Activated CD4-positive, alpha-beta memory T cell treated with anti-CD3 and anti-CD28 coated beads for 36 hours (primary cell): ENCODE measurements at regions of chr11 and their contacts with region 1.

Region 1: DNA sequence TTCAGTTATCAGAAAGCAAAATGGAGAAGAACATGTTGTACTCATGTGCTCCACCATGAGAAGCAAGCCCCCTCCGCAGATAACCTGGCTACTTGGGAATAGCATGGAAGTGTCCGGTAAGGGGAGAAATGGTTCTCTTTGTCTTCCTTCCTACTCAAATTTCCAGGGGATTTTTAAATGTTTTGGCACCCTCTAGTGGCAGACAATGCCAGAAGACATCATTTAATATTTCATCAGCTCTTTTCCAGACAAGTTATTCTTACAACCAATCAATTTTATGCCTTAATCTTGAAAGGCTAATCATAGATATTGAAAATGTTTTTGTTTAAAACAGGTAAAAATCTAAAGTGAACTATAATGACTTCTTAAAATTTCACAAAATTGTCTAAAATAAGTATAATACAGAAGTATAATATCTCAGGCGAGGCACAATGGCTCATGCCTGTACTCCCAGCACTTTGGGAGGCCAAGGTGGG is 15.7 kb downstream of the CRTAM start:
- DNase-seq: peak; percentile 28
- H3K4me3 Mint-ChIP-seq: no peak overlapping the region
- H3K27ac Mint-ChIP-seq: no peak overlapping the region
- H3K4me1 Mint-ChIP-seq: peaks cover 42% of the 10 kb centered on the region
- H3K27me3 Mint-ChIP-seq: peaks cover 1% of the 10 kb centered on the region

Region 2: GRCh38 chr11:122412581-122412980 is 441.4 kb before region 1 on chr11:
- CTCF ChIA-PET with region 1: no interaction called
- POLR2A ChIA-PET with region 1: no interaction called
- intact Hi-C with region 1: no loop called
- DNase-seq: no peak
- H3K4me3 Mint-ChIP-seq: no peak overlapping the region
- H3K27ac Mint-ChIP-seq: no peak overlapping the region
- H3K4me1 Mint-ChIP-seq: no peaks in the 10 kb centered on the region
- H3K27me3 Mint-ChIP-seq: no peaks in the 10 kb centered on the region

Region 3: DNA sequence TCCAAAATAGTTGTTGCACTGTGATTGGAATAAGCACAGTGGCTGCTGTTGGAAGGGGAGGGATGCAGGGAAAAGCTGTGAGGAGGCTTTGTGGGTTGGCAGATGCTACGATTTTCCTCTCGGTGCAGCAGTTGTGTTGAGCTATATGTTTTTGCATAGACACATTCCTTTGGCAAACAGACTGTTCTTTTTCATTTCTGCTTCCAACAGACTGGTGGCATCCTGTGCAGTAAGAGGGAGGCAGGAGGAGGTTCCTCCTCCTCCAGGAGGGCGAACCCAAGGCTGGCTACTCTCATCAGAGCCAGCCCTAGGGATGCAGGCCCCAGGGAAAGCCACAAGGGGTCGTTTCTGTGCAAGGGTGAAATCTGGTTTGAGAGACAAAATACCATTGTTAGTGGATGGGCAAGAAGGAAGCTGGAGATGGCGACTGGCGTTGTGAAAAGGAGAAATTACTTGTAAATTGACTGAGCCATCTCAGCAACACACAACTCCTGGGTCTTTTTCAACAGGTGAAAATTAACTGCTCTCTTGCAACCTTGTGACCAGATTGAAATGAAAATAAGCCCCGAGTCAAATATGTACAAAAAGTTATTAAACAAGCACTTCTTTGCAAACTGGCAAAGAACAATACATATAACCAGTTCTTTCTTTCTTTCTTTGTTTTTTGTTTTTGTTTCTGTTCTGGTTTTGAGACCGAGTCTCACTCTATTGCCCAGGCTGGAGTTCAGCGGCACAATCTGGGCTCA is 225.0 kb before region 1 on chr11:
- CTCF ChIA-PET with region 1: interaction called, 75 read pairs
- POLR2A ChIA-PET with region 1: no interaction called
- intact Hi-C with region 1: loop called (anchors 1 kb)
- DNase-seq: peak; percentile 79
- H3K4me3 Mint-ChIP-seq: no peak overlapping the region
- H3K27ac Mint-ChIP-seq: no peak overlapping the region
- H3K4me1 Mint-ChIP-seq: peaks cover 6% of the 10 kb centered on the region
- H3K27me3 Mint-ChIP-seq: peaks cover 1% of the 10 kb centered on the region

Region 4: GRCh38 chr11:122754553-122755322 is 99.3 kb before region 1 on chr11:
- CTCF ChIA-PET with region 1: interaction called, 12 read pairs
- POLR2A ChIA-PET with region 1: interaction called, 3 read pairs
- intact Hi-C with region 1: no loop called
- DNase-seq: peak; percentile 42
- H3K4me3 Mint-ChIP-seq: no peak overlapping the region
- H3K27ac Mint-ChIP-seq: no peak overlapping the region
- H3K4me1 Mint-ChIP-seq: peaks cover 51% of the 10 kb centered on the region
- H3K27me3 Mint-ChIP-seq: no peaks in the 10 kb centered on the region

Region 5: DNA sequence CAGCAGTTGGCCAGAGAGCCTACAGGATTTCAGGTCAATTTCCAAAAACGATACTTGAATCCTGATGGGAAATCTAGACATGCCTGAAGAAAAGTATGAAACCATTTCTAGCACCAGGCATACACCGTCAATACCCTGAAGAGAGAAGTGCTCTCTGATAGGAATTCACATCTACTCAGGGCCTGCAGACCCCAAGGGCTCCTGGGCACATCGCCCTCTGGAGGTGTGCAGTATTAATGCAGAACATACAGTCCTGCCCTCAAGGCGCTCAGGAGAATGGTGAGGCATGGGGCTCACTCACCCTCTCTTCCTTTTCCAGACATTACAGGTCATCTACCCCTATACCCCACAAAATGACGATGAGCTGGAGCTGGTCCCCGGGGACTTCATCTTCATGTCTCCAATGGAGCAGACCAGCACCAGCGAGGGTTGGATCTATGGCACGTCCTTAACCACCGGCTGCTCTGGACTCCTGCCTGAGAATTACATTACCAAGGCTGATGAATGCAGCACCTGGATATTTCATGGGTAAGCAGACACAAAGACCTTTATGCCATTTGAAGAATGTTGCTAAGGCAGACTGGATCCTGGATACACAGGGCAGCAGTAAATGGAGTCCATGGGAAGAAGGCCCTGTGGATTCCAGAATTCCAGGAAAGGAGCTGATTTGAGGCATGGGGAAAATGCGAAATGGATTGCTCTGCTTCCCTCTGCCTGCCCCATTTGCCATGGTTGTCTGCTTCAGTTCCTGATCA is 65.1 kb before region 1 on chr11:
- CTCF ChIA-PET with region 1: interaction called, 118 read pairs
- POLR2A ChIA-PET with region 1: no interaction called
- intact Hi-C with region 1: no loop called
- DNase-seq: no peak
- H3K4me3 Mint-ChIP-seq: no peak overlapping the region
- H3K27ac Mint-ChIP-seq: no peak overlapping the region
- H3K4me1 Mint-ChIP-seq: no peaks in the 10 kb centered on the region
- H3K27me3 Mint-ChIP-seq: no peaks in the 10 kb centered on the region

Region 6: GRCh38 chr11:122808478-122808869 is 45.5 kb before region 1 on chr11:
- CTCF ChIA-PET with region 1: interaction called, 38 read pairs
- POLR2A ChIA-PET with region 1: no interaction called
- intact Hi-C with region 1: no loop called
- DNase-seq: peak; percentile 41
- H3K4me3 Mint-ChIP-seq: no peak overlapping the region
- H3K27ac Mint-ChIP-seq: peak overlapping the region; percentile 0
- H3K4me1 Mint-ChIP-seq: peaks cover 27% of the 10 kb centered on the region
- H3K27me3 Mint-ChIP-seq: no peaks in the 10 kb centered on the region

Region 7: DNA sequence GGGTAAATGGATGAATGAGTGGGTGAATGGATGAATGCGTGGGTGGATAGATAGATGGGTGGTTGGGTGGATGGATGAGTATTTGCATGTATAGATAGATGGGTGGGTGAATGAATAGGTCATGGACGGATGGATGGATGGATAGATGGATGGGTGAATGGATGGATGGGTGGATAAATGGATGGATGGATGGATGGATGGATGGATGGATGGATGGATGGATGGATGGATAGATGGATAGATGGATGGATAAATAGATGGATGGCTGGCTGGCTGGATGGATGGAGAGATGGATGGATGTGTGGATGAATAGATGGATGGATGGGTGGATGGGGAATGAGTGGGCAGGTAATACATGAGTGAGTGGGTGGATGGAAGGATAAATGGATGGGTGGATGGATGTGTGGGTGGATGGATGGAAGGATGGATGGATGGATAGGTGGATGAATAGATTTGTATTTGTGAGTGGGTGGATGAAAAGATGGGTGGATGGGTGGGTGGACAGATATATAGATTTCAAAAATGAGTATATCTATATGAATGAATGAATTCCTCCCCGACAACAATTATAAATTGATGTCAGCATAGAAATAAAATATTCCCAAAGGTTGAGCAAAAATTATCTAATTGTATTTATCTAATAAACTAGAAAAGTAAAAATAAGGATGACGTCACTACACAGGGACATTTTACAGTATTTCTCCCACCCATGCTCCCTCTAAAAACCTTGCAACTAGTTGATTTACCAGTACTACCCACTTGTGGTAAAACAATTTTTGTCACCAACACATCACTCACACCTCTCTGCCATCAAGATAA is 16.3 kb before region 1 on chr11:
- CTCF ChIA-PET with region 1: interaction called, 10 read pairs
- POLR2A ChIA-PET with region 1: interaction called, 3 read pairs
- intact Hi-C with region 1: no loop called
- DNase-seq: no peak
- H3K4me3 Mint-ChIP-seq: no peak overlapping the region
- H3K27ac Mint-ChIP-seq: no peak overlapping the region
- H3K4me1 Mint-ChIP-seq: peaks cover 2% of the 10 kb centered on the region
- H3K27me3 Mint-ChIP-seq: peaks cover 2% of the 10 kb centered on the region

Region 8: DNA sequence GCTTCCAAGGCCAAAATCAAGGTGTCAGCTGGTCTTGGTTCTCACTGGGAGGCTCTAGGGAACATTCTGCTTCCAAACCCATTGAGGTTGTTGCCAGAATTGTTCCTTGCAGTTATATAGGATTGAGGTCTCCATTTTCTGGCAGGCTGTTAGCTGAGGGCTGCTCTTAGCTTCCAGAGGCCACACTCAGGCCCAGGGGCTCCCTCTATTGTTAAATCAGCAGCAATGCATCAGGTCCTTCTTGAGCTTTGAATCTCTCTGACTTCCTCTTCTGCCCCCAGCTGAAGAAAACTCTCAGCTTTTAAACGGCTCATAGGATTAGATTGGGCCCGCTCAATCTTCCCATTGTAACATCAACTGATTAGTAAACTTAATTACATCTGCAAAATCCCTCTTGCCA is 167.0 kb after region 1 on chr11:
- CTCF ChIA-PET with region 1: interaction called, 372 read pairs
- POLR2A ChIA-PET with region 1: no interaction called
- intact Hi-C with region 1: no loop called
- DNase-seq: peak; percentile 34
- H3K4me3 Mint-ChIP-seq: no peak overlapping the region
- H3K27ac Mint-ChIP-seq: no peak overlapping the region
- H3K4me1 Mint-ChIP-seq: peaks cover 5% of the 10 kb centered on the region
- H3K27me3 Mint-ChIP-seq: peaks cover 3% of the 10 kb centered on the region

Region 9: DNA sequence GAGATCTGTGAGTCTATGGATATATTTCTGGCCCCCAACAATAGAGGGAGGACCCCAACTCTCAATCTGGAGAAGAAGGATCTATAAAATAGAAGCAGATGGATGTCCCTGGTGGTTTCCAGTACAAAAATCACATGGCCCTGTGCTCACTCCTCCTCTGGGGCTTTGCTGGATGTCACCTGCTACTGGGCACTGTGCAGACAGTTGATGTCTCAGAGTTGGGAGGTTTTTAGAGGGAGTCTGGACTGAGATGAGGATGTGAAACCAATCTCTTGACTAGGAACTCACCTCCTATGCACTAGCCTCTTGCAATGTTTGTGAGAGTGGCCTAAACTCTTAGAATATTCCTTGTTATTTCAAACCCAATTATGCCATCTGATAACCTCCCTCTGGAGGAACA is 693.2 kb after region 1 on chr11:
- CTCF ChIA-PET with region 1: no interaction called
- POLR2A ChIA-PET with region 1: no interaction called
- intact Hi-C with region 1: no loop called
- DNase-seq: no peak
- H3K4me3 Mint-ChIP-seq: no peak overlapping the region
- H3K27ac Mint-ChIP-seq: no peak overlapping the region
- H3K4me1 Mint-ChIP-seq: peaks cover 26% of the 10 kb centered on the region
- H3K27me3 Mint-ChIP-seq: no peaks in the 10 kb centered on the region